Activated naive CD4-positive, alpha-beta T cell treated with anti-CD3 and anti-CD28 coated beads for 36 hours (primary cell): ENCODE measurements at regions of chr3 and their contacts with region 1.

Region 1: GRCh38 chr3:131735116-131735515 is 232.3 kb upstream of the MRPL3 start:
- DNase-seq: no peak
- H3K4me3 Mint-ChIP-seq: no peak overlapping the region
- H3K27ac Mint-ChIP-seq: no peak overlapping the region
- H3K4me1 Mint-ChIP-seq: peaks cover 17% of the 10 kb centered on the region
- H3K27me3 Mint-ChIP-seq: peaks cover 12% of the 10 kb centered on the region

Region 2: DNA sequence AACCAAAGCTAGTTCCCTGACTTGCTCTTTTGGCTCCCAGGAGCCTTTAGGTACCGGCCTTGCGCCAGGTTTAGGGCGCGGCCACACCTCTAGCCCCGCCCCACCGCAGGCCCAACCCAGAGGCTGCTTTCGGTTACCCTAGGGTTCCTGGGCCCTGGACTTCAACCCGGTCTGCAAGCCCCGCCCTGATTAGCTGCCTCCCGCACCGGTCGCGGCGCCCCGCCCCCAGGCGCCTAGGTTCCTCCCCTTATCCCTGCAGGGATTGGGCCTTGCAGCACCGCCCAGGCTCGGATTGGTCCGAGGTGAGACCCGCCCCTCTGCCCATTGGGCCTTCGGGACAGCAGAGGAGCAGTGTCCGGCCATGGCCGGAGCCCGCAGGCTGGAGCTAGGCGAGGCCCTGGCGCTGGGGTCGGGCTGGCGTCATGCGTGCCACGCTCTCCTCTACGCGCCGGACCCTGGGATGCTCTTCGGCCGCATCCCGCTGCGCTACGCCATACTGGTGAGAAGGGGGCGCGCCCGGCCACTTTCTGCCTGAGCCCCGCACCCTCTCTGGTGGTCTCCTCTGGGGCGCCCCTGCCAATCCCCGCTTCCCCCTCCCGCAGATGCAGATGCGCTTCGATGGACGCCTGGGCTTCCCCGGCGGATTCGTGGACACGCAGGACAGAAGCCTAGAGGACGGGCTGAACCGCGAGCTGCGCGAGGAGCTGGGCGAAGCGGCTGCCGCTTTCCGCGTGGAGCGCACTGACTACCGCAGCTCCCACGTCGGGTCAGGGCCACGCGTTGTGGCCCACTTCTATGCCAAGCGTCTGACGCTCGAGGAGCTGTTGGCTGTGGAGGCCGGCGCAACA is 353.4 kb before region 1 on chr3 and contains the start of gene NUDT16:
- CTCF ChIA-PET with region 1: no interaction called
- intact Hi-C with region 1: loop called (anchors 5 kb)
- DNase-seq: peak; percentile 97
- H3K4me3 Mint-ChIP-seq: peak within 1 kb of the TSS; percentile 94
- H3K27ac Mint-ChIP-seq: peak within 1 kb of the TSS; percentile 81
- H3K4me1 Mint-ChIP-seq: peaks cover 21% of the 10 kb centered on the region
- H3K27me3 Mint-ChIP-seq: no peaks in the 10 kb centered on the region
- total RNA-seq, gene NUDT16: 4.9 to 5.9 TPM

Region 3: DNA sequence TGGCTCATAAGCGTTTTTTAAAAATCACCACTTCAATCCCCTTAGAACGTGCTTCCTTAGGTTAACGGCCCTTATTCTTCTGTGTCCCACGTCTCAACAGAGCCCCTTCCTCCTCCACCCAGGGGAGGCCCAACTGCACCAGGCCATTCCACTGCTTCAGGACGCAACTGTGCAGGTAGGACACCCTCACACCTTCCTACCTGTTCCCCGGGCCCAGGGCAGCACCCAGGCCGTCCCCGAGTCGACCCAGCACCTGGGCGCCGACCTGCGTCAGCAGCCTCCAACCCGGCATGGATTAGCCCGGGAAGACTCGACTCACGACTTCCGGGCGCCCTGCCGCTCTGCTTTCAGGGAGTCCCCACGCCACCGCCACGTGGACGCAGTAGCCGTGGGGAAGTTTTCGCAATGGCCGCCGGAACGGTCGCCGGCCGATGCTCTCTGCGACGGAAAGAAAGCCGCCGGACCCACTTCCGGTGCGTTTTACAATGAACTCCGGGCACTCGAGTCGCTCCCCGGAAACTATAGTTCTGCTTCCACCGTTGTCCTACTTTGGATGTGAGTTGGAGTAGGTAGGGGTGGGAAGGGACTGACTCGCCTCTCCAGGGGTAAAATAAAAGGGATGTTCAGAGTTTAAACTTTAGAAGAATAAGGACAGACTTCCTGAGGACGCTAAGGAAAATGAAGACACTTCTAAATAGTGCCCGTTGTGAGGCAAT is 232.4 kb before region 1 on chr3 and contains the start of gene MRPL3:
- CTCF ChIA-PET with region 1: no interaction called
- intact Hi-C with region 1: loop called (anchors 10 kb)
- DNase-seq: peak; percentile 90
- H3K4me3 Mint-ChIP-seq: peak within 1 kb of the TSS; percentile 91
- H3K27ac Mint-ChIP-seq: peak within 1 kb of the TSS; percentile 88
- H3K4me1 Mint-ChIP-seq: peaks cover 37% of the 10 kb centered on the region
- H3K27me3 Mint-ChIP-seq: no peaks in the 10 kb centered on the region
- total RNA-seq, gene MRPL3: 151 to 161 TPM

Region 4: GRCh38 chr3:131714585-131715220 is 20.4 kb before region 1 on chr3:
- CTCF ChIA-PET with region 1: no interaction called
- intact Hi-C with region 1: loop called (anchors 1 kb)
- DNase-seq: peak; percentile 30
- H3K4me3 Mint-ChIP-seq: no peak overlapping the region
- H3K27ac Mint-ChIP-seq: peak overlapping the region; percentile 39
- H3K4me1 Mint-ChIP-seq: peaks cover 2% of the 10 kb centered on the region
- H3K27me3 Mint-ChIP-seq: peaks cover 4% of the 10 kb centered on the region

Region 5: DNA sequence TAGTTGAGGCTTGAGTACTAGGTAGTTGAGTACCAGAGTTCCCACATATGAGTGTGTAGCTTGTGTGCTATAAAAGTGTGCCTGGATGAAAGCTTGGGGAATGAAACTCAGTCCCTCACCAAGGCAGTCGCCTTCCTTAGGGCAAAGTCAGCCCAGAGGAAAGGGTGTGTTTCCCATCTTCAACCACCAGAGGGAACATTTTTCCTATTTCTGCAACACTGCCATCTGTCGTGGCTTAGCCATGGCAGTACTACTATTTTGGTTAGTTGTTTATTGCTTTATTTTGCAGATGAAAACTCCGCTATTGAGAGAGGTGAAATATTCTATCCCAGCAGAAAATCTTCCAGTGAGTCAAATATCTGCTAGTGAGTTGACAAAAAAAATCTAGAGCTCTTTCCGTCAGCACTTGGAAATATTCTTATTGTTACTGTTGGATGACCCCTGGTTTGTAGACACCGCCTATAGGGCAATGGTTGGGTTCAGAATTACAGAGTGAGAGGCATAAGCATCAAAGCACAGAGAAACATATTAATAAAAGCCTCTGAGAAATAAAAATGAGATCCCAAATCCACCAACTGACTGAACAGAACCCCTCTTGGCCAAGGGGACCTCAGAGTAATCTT is 59.8 kb after region 1 on chr3:
- CTCF ChIA-PET with region 1: no interaction called
- intact Hi-C with region 1: no loop called
- DNase-seq: peak; percentile 43
- H3K4me3 Mint-ChIP-seq: no peak overlapping the region
- H3K27ac Mint-ChIP-seq: no peak overlapping the region
- H3K4me1 Mint-ChIP-seq: peaks cover 8% of the 10 kb centered on the region
- H3K27me3 Mint-ChIP-seq: peaks cover 13% of the 10 kb centered on the region

Region 6: GRCh38 chr3:132174500-132174899 is 439.4 kb after region 1 on chr3:
- CTCF ChIA-PET with region 1: no interaction called
- intact Hi-C with region 1: loop called (anchors 10 kb)
- DNase-seq: no peak
- H3K4me3 Mint-ChIP-seq: no peak overlapping the region
- H3K27ac Mint-ChIP-seq: no peak overlapping the region
- H3K4me1 Mint-ChIP-seq: no peaks in the 10 kb centered on the region
- H3K27me3 Mint-ChIP-seq: peaks cover 6% of the 10 kb centered on the region